Transverse colon (tissue), 4 donors: ENCODE measurements at regions of chr15 and their contacts with region 1.

Region 1: GRCh38 chr15:40044717-40045571 is 6.0 kb upstream of the SRP14 start:
- DNase-seq: peak; percentile 94
- H3K4me3 ChIP-seq: peak overlapping the region in 1 of 4 donors; percentile 25
- H3K27ac ChIP-seq: peak overlapping the region; percentile 52 to 72 (median 58)
- H3K4me1 ChIP-seq: peaks cover 35 to 57% (median 49%) of the 10 kb centered on the region in 4 donors
- H3K27me3 ChIP-seq: no peaks in the 10 kb centered on the region
- CTCF ChIP-seq: peak; percentile 84 to 94 (median 88)
- EP300 ChIP-seq: no peak
- POLR2A ChIP-seq: no peak

Region 2: DNA sequence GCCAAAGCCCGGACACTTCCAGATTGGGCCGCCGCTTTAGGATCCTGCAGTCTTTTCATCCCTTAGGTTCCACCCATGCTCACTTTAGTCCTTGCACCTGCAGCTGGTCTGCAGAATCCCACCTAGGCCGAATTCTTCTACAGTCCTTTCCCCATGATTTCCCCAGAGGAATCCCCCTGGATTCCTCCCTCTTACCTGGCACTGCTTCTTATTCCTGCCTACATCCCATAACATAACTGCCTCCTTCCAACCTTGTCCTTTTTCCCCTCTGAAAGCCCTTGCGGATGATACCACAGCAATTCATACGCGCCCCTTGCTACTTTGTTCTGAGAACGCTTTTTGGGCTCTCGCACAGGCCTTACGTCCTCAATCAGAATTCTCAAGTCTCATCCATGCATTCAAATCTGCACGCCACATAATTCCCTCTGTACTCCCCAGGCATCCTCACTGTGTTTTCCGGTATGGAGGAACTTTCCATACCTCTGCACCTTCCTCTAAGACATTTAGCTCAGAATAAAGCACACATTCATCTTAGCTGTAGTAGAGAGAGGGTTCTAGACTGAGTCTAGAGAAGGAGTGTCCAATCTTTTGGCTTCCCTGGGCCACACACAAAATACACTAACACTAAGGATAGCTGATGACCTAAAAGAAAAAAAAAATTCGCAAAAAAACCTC is 110.4 kb before region 1 on chr15:
- in situ Hi-C with region 1: no loop called
- intact Hi-C with region 1: no loop called
- DNase-seq: no peak
- H3K4me3 ChIP-seq: peak overlapping the region; percentile 52 to 86 (median 68)
- H3K27ac ChIP-seq: peak overlapping the region; percentile 82 to 91 (median 87)
- H3K4me1 ChIP-seq: peaks cover 0 to 39% (median 18%) of the 10 kb centered on the region in 4 donors
- H3K27me3 ChIP-seq: no peaks in the 10 kb centered on the region
- CTCF ChIP-seq: no peak
- EP300 ChIP-seq: no peak
- POLR2A ChIP-seq: no peak

Region 3: DNA sequence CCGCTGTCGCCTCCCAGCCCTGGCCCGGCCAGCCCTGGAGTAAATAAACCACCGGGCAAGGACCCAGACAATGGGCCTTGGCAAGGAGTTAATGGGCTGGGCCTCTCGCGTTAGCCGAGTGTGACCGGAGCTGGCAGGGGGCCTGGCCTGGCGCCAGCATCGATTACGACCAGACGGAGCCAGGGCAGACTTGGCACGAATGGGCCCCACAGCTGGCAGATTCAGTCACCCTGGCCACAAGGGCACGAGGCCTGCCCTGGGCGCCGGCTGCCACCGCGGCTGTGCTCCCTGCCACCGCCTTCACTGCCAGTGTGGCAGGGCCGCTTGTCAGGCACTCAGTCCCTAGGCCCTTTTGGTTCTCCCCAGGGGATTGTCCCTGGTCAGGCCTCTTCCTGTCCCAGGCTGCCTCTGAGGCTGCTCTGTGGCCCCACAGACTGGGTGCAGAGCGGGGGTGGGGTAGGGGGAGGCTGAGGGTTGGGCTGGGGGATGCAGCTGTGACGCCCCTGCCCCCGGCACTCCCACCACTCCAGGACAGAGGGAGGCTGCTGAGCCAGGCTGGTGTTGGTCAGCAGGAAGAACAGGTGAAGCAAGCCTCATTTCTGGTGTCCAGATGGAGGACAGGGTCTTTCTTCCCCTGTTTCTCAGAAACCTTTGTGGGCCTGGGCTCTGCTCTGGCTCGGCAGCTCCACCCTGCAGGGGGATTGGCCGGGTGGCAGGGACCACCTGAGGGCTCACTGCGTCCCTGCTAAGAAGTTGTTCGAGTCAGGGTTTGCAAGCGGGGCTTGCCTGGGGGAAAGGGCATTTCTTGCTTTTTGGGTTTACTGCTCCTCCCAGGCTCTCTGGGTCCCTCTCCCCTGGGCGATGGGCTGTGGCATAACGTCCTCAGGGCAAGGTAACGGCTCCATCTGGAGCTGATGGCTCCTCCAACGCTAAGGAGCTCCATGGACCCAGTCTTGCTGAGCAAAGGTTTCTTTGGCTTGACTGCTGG is 24.5 kb after region 1 on chr15:
- in situ Hi-C with region 1: no loop called
- intact Hi-C with region 1: no loop called
- DNase-seq: peak; percentile 95
- H3K4me3 ChIP-seq: no peak overlapping the region
- H3K27ac ChIP-seq: peak overlapping the region; percentile 64 to 80 (median 75)
- H3K4me1 ChIP-seq: peaks cover 14 to 40% (median 25%) of the 10 kb centered on the region in 4 donors
- H3K27me3 ChIP-seq: no peaks in the 10 kb centered on the region
- CTCF ChIP-seq: no peak
- EP300 ChIP-seq: no peak
- POLR2A ChIP-seq: peak; percentile 23

Region 4: GRCh38 chr15:40108855-40109735 is 64.2 kb after region 1 on chr15 and contains the start of gene BMF:
- in situ Hi-C with region 1: loop called in 2 of 4 experiments (anchors 10 kb)
- intact Hi-C with region 1: loop called (anchors 5 kb)
- DNase-seq: peak; percentile 100
- H3K4me3 ChIP-seq: peak within 1 kb of the TSS; percentile 37 to 84 (median 81)
- H3K27ac ChIP-seq: peak within 1 kb of the TSS; percentile 90 to 94 (median 91)
- H3K4me1 ChIP-seq: peaks cover 33 to 51% (median 44%) of the 10 kb centered on the region in 4 donors
- H3K27me3 ChIP-seq: no peaks in the 10 kb centered on the region
- CTCF ChIP-seq: peak in 4 of 5 experiments; percentile 10 to 46 (median 23)
- EP300 ChIP-seq: no peak
- POLR2A ChIP-seq: peak; percentile 58
- total RNA-seq, gene BMF: 13.3 to 35.4 (median 25.1) TPM

Region 5: GRCh38 chr15:40217159-40217824 is 172.3 kb after region 1 on chr15:
- in situ Hi-C with region 1: loop called in 1 of 4 experiments (anchors 25 kb)
- intact Hi-C with region 1: no loop called
- DNase-seq: peak; percentile 55
- H3K4me3 ChIP-seq: no peak overlapping the region
- H3K27ac ChIP-seq: no peak overlapping the region
- H3K4me1 ChIP-seq: peaks cover 0 to 9% (median 3%) of the 10 kb centered on the region in 4 donors
- H3K27me3 ChIP-seq: no peaks in the 10 kb centered on the region
- CTCF ChIP-seq: peak; percentile 77 to 93 (median 89)
- EP300 ChIP-seq: no peak
- POLR2A ChIP-seq: no peak

Region 6: GRCh38 chr15:40274350-40275274 is 229.7 kb after region 1 on chr15:
- in situ Hi-C with region 1: loop called (anchors 10 to 25 kb)
- intact Hi-C with region 1: loop called (anchors 2 kb)
- DNase-seq: peak; percentile 86
- H3K4me3 ChIP-seq: no peak overlapping the region
- H3K27ac ChIP-seq: no peak overlapping the region
- H3K4me1 ChIP-seq: peaks cover 0 to 5% (median 3%) of the 10 kb centered on the region in 4 donors
- H3K27me3 ChIP-seq: peaks cover 9% of the 10 kb centered on the region
- CTCF ChIP-seq: peak; percentile 100
- EP300 ChIP-seq: no peak
- POLR2A ChIP-seq: no peak